ENCODE measurements at regions of chr3 and their contacts with region 1.

Region 1: DNA sequence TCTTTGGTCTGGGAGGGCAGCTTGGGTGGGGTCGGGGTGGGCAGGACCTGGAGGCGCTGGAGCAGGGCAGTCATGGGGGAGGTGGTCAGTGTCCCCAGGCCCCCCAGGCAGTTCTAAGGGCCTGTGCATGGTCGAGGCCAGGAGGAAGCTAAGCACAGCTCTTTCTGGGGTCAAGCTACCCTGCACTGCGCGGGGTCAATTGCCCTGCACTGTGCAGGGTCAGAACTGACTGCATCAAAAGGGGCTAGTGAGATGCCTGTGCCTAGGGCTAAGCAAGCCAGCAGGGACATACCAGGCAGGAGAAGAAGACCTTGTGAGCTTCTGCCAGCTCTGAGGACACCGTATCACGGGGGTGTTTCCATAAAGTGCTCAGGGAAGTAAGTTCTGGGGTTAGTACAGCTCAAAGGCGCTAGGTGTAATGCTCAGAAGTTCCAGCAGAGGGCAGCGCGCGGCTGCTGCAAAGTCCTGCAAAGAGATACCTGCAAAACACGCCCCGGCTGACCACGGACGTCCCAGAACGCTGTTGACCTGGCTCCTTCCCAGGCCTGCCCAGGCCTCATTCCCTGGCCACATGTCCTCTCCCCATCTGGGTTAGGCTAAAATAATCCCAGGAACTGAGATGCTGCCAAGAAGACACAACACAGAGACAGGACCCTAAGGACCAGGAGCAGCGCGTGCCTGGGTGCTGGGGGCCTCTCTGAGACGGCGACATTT is 18.8 kb upstream of the IQSEC1 start:
- DNase-seq: no peak
- ATAC-seq: peak; percentile 86
- H3K4me3 ChIP-seq: no peak overlapping the region
- H3K27ac ChIP-seq: no peak overlapping the region
- H3K4me1 ChIP-seq: peaks cover 25% of the 10 kb centered on the region
- H3K27me3 ChIP-seq: no peaks in the 10 kb centered on the region
- CTCF ChIP-seq: peak; percentile 94 to 98 (median 95)
- EP300 ChIP-seq: no peak
- POLR2A ChIP-seq: no peak
- RAD21 ChIP-seq: peak; percentile 87

Region 2: GRCh38 chr3:13012228-13012691 is 79.8 kb before region 1 on chr3:
- CTCF ChIA-PET with region 1: interaction called, 13 read pairs
- POLR2A ChIA-PET with region 1: interaction called, 4 read pairs
- RAD21 ChIA-PET with region 1: interaction called, 6 read pairs
- SMC1A ChIA-PET with region 1: interaction called, 8 read pairs
- in situ Hi-C with region 1: no loop called
- intact Hi-C with region 1: loop called (anchors 2 kb)
- DNase-seq: peak; percentile 84
- ATAC-seq: peak; percentile 58
- H3K4me3 ChIP-seq: peak overlapping the region; percentile 39; the same call in 1 of the 2 replicates
- H3K27ac ChIP-seq: peak overlapping the region; percentile 99
- H3K4me1 ChIP-seq: peaks cover 94% of the 10 kb centered on the region
- H3K27me3 ChIP-seq: no peaks in the 10 kb centered on the region
- CTCF ChIP-seq: no peak
- EP300 ChIP-seq: peak; percentile 51 to 58; a peak in 2 of 4 replicates
- POLR2A ChIP-seq: no peak
- RAD21 ChIP-seq: no peak

Region 3: DNA sequence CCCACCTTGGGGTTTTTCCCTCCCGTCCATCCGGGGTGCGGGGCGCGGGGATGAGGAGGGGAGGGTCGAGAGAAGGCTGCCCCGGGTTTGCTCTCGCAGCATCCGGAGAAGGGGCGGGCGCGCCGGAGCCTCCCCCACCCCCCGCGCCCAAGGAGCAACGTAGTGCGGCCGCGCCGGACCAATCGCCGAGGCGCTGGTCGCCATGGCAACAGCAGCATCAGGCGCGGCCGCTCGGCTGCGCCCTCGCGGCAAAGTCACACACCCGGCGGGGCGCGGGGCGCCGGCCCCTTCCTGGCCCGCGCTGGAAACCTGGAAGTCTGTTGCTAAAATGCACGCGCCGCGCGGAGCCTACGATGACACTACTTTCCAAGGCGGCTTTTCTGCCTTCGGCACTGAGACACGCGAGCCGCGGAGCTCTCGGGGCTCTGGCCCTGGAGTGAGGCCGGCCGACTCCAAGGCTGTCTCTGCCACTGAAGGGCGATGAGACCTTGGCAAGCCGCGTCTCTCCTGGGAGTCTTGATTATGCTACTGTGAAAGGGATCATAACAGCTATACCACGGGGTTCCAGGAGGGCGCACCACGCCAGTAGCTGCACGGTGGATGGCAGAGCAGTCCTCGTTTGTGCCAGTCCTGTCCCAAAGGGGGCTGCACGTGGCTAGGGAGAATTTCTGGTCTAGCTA is 18.6 kb before region 1 on chr3 and contains the start of gene IQSEC1:
- CTCF ChIA-PET with region 1: interaction called, 16 read pairs
- POLR2A ChIA-PET with region 1: no interaction called
- RAD21 ChIA-PET with region 1: interaction called, 3 read pairs
- SMC1A ChIA-PET with region 1: interaction called, 11 read pairs
- in situ Hi-C with region 1: no loop called
- intact Hi-C with region 1: no loop called
- DNase-seq: no peak
- ATAC-seq: peak; percentile 67
- H3K4me3 ChIP-seq: peak within 1 kb of the TSS; percentile 77
- H3K27ac ChIP-seq: no peak within 1 kb of the TSS
- H3K4me1 ChIP-seq: peaks cover 45% of the 10 kb centered on the region
- H3K27me3 ChIP-seq: peaks cover 0 to 11% of the 10 kb centered on the region in 2 experiments; a peak in 2 of 4 replicates
- CTCF ChIP-seq: 0 out of 6 replicates have a peak, but pooled peaks of 2 of the 3 experiments have one; percentile 1 to 3
- EP300 ChIP-seq: no peak
- POLR2A ChIP-seq: no peak
- RAD21 ChIP-seq: no peak
- polyA plus RNA-seq, gene IQSEC1: 0.92 to 2.0 TPM

Region 4: DNA sequence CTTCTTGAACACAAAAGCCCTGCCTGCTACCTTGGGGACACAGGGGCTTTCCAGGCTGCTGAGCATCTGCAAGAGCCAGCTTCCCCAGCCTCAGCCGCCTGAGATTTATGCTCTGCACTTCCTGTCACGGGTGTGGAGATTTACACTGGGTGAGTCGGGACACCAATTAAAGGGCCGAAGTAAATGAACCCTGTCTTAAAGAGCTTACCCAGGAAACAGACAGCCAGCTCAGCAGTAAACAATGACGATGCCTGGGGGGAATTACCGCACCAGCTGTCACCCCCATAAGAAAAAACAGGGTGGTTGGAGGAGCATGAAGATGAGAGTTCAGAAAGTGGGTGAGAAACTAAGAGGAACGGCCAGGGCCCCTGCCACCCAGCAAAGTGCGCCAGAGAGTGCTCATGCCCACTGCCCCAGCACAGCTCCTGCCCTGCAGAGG is 18.6 kb after region 1 on chr3:
- CTCF ChIA-PET with region 1: interaction called, 46 read pairs
- POLR2A ChIA-PET with region 1: interaction called, 6 read pairs
- RAD21 ChIA-PET with region 1: interaction called, 11 read pairs
- SMC1A ChIA-PET with region 1: interaction called, 16 read pairs
- in situ Hi-C with region 1: no loop called
- intact Hi-C with region 1: no loop called
- DNase-seq: peak; percentile 76
- ATAC-seq: peak; percentile 95
- H3K4me3 ChIP-seq: no peak overlapping the region
- H3K27ac ChIP-seq: peak overlapping the region; percentile 58
- H3K4me1 ChIP-seq: peaks cover 13% of the 10 kb centered on the region
- H3K27me3 ChIP-seq: no peaks in the 10 kb centered on the region
- CTCF ChIP-seq: no peak
- EP300 ChIP-seq: peak; percentile 15 to 46; a peak in 1 of 4 replicates
- POLR2A ChIP-seq: no peak
- RAD21 ChIP-seq: no peak

Region 5: DNA sequence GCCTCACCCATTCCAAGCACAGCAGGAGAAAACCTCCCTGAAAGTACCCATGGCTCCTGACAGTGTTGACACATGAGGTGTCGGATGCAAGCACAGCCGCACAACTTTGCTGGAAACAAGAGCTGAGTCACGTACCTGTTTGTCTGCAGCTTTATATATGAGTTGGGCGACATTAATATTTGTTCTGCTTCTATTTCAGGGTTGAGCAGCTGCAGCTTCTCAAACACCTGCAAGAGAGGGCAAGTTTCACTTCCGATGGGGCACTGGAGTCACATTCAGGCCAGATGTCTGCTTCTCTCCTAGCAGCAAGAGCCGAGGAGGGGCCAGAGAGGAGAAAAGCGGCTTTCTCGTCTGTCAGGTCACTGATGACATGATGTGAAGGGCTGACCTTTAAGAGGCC is 240.1 kb after region 1 on chr3:
- CTCF ChIA-PET with region 1: interaction called, 10 read pairs
- POLR2A ChIA-PET with region 1: no interaction called
- RAD21 ChIA-PET with region 1: interaction called, 6 read pairs
- SMC1A ChIA-PET with region 1: interaction called, 3 read pairs
- in situ Hi-C with region 1: no loop called
- intact Hi-C with region 1: loop called (anchors 10 kb)
- DNase-seq: peak; percentile 93
- ATAC-seq: peak; percentile 93
- H3K4me3 ChIP-seq: peak overlapping the region; percentile 43; the same call in 1 of the 2 replicates
- H3K27ac ChIP-seq: peak overlapping the region; percentile 88
- H3K4me1 ChIP-seq: peaks cover 38% of the 10 kb centered on the region
- H3K27me3 ChIP-seq: no peaks in the 10 kb centered on the region
- CTCF ChIP-seq: no peak
- EP300 ChIP-seq: peak; percentile 58 to 93
- POLR2A ChIP-seq: peak; percentile 54
- RAD21 ChIP-seq: no peak

Region 6: GRCh38 chr3:13461169-13462158 is 369.4 kb after region 1 on chr3:
- CTCF ChIA-PET with region 1: interaction called, 56 read pairs
- POLR2A ChIA-PET with region 1: interaction called, 5 read pairs
- RAD21 ChIA-PET with region 1: interaction called, 16 read pairs
- SMC1A ChIA-PET with region 1: interaction called, 86 read pairs
- in situ Hi-C with region 1: no loop called
- intact Hi-C with region 1: no loop called
- DNase-seq: no peak
- ATAC-seq: peak; percentile 98
- H3K4me3 ChIP-seq: no peak overlapping the region
- H3K27ac ChIP-seq: no peak overlapping the region
- H3K4me1 ChIP-seq: no peaks in the 10 kb centered on the region
- H3K27me3 ChIP-seq: no peaks in the 10 kb centered on the region; a peak in 4 of 4 replicates
- CTCF ChIP-seq: peak; percentile 60 to 87 (median 75)
- EP300 ChIP-seq: no peak
- POLR2A ChIP-seq: no peak
- RAD21 ChIP-seq: peak; percentile 54